KBM-7 (cell line): ENCODE measurements at regions of chr5 and their contacts with region 1.

Region 1: DNA sequence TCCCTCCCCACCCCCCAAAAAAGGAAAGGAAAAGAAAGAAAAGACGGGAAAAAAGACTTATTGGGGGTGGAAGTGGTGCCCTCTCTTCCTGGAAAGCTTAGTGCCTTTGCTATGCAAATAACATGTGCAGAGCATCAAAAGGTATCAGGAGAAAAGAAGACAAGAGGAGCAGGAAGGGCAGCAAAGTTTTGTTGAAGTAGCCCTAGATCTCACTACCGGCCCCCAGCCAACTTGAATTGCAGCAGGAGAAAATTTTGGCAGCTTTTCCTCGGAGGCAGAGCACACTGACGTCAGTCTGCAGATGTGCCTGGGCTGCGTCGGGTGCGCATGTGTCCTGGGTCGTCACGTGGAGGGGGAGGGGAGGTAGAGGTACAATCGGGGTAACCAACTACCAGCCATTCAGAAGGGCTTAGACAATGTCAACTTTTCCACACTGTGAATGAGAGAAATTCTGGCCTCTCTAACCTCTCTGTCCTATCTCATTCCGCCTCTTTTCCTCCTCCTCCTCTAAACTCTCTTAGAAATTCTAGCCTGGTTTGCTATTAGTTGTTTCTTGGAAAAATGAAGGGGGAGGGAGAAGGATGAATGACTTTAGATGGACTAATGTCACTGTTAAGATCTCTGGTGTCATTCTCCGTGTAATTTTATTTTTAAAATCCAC is at the start of gene ADAMTS6:
- DNase-seq: peak; percentile 83

Region 2: DNA sequence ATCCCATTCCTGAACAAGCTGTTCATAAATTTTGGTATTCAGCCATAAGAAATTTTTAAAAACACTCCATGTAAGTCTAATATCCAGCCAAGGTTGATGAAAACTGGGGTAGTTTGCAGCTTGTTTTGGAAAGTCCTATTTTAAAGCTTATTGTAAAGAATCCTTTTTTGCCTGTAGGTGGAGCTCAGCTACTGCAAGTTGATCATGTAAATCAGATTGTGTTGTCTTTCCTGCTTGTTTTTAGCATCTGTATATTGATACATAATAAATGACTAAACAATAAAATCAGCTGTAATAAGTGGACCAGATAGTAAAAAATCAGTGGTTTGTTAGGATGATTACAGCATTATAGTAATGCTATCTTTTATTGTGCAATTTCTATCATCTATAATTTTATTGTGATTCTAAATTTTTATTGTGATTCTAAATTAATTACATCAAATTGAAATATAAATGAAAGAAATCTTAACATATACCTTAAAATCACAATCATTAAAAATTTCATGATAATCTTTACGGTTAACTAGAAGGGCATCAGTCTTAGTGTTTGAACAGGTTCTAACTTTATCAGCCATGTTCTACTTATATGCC is 670.6 kb before region 1 on chr5:
- in situ Hi-C with region 1: loop called (anchors 25 kb)
- DNase-seq: peak; percentile 59

Region 3: DNA sequence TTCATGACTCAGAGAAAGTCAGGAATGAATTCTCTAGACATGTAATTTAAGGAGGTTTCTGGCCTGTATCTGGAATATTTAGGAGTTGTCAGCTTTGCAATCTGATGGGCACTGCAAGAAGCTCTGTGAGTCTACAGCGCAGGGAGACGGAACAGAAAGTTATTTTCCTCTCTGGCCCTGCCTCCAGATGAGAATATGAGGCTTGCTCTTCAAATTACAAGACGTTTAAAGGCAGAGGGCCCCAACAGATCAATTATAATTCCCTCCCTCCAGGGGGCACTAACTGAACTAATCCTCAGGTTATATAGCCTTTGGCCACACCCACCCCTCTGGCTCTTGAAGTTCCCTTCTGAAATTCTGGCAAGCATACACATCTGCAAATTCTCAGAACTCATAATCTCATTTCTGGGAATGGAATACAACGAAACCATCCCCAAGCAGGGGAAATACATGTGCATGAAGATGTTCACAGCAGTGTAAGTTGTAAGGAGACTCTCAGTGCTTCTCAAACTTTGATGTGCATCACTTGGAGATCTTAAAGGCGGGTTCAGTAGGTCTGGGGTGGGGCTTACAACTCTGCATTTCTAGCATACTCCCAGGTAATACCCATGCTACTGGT is 405.4 kb before region 1 on chr5:
- in situ Hi-C with region 1: loop called (anchors 25 kb)
- DNase-seq: peak; percentile 94

Region 4: DNA sequence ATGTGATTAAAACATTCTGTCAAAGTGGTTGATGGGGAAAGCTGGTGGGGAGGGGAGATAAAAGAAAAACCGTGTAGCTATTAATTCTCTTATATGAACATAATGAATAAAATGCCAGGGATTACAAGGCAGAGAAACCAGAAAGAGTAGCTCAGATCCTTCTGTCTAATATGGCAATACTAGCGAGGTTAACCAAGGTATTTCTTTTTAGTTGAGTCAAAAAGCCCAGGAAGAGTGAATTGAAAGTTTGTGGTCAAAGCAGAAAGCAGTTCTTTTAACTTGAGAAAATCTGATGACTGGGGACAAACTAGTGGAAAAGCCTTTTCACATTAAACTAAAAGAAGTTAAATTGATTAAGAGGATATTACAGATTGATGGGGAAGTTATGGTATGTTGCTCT is 520.6 kb after region 1 on chr5:
- in situ Hi-C with region 1: no loop called
- DNase-seq: no peak